WTC11 (cell line): ENCODE measurements at regions of chr1 and their contacts with region 1.

Region 1: DNA sequence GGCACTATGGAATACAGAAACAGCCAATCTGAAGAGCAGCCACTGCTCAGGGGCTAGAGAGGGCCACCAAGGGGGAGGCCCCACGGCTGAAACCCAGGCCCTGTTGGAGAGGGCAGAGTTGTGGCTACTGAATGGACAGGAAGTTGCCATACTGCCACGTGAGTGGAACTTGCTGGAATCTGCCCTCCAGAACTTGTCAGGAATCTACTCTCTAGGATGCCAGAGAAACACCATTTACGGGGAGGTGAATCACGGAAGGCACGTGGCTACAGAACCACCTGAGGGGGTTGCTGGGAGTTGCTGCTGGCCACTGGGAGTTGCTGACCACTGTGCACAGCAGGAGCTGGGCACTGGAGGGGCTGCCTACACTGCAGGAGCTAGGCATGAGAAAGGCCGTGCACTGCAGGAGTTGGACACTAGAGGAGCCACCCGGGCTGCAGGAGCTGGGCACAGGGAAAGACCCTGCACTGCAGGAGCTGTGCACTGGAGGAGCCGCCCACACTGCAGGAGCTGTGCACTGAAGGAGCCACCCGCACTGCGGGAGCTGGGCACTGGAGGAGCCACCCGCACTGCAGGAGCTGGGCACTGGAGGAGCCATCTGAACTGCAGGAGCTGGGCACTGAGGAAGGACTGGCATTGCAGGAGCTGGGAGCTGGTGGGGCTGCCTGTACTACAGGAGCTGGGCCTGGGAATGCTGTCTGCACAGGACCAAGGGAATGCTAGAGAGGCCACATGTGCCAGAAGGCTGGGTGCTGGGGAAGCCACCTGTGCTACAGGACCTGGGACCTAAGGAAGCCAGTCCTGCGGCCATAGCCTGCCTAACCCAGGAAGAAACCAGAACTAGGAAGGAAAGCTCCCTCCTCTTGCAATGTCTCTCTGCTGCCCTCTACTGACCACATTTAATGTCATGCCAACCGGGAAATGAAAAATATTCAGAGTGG is 343.4 kb downstream of the MATN1 start:
- DNase-seq: peak; percentile 50
- ATAC-seq: peak; percentile 85
- H3K4me3 Mint-ChIP-seq: no peak overlapping the region
- H3K27ac Mint-ChIP-seq: no peak overlapping the region
- H3K4me1 Mint-ChIP-seq: no peaks in the 10 kb centered on the region
- H3K27me3 Mint-ChIP-seq: no peaks in the 10 kb centered on the region; the same call in 1 of the 2 replicates
- CTCF ChIP-seq: peak; percentile 66

Region 2: GRCh38 chr1:30111431-30111830 is 268.5 kb before region 1 on chr1:
- CTCF ChIA-PET with region 1: interaction called, 13 read pairs
- POLR2A ChIA-PET with region 1: no interaction called
- DNase-seq: peak; percentile 76
- ATAC-seq: peak; percentile 97
- H3K4me3 Mint-ChIP-seq: no peak overlapping the region
- H3K27ac Mint-ChIP-seq: no peak overlapping the region; the same call in 1 of the 2 replicates
- H3K4me1 Mint-ChIP-seq: 0 out of 2 replicates have a peak, but pooled peaks cover 3% of the 10 kb centered on the region
- H3K27me3 Mint-ChIP-seq: no peaks in the 10 kb centered on the region
- CTCF ChIP-seq: peak; percentile 32; the same call in 1 of the 2 replicates

Region 3: GRCh38 chr1:30287976-30288375 is 92.0 kb before region 1 on chr1:
- CTCF ChIA-PET with region 1: interaction called, 11 read pairs
- POLR2A ChIA-PET with region 1: no interaction called
- DNase-seq: no peak
- ATAC-seq: no peak
- H3K4me3 Mint-ChIP-seq: no peak overlapping the region
- H3K27ac Mint-ChIP-seq: no peak overlapping the region
- H3K4me1 Mint-ChIP-seq: no peaks in the 10 kb centered on the region
- H3K27me3 Mint-ChIP-seq: no peaks in the 10 kb centered on the region
- CTCF ChIP-seq: no peak

Region 4: GRCh38 chr1:30336550-30337323 is 43.2 kb before region 1 on chr1:
- CTCF ChIA-PET with region 1: interaction called, 14 read pairs
- POLR2A ChIA-PET with region 1: no interaction called
- DNase-seq: no peak
- ATAC-seq: no peak
- H3K4me3 Mint-ChIP-seq: no peak overlapping the region
- H3K27ac Mint-ChIP-seq: no peak overlapping the region
- H3K4me1 Mint-ChIP-seq: no peaks in the 10 kb centered on the region
- H3K27me3 Mint-ChIP-seq: no peaks in the 10 kb centered on the region
- CTCF ChIP-seq: no peak

Region 5: DNA sequence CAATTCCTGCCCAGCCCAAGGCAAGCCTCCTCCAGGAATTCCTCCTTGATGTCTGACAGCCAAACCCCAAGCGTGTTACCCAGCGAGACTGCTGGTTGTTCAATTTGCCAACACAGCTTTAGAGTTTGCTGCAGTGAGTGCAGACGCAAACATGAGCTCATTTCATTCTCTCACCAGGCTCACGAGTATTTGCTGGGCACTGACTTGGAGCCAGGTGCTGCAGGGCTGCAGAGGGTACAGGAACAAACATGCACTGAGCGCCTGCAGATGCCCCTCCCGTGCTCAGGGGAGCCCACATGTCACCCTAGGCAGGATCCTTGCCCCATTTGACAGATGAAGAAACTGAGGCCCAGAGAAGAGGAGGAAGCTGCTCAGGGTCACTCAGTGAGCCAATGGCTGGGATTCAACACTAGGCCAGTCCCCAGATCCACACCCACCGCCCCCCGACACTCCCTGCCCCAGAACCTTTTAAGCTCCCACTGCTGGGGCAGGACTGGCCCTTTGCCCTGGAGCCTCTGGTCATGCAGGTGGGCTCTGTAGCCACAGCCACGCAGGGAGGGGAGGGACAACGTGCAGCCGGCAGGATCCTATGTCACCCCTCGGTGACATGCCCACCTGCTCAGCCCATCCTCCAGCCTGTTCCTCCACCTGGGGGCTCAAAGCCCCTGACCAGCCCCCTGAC is 20.3 kb before region 1 on chr1:
- CTCF ChIA-PET with region 1: interaction called, 37 read pairs
- POLR2A ChIA-PET with region 1: no interaction called
- DNase-seq: no peak
- ATAC-seq: no peak
- H3K4me3 Mint-ChIP-seq: no peak overlapping the region
- H3K27ac Mint-ChIP-seq: no peak overlapping the region
- H3K4me1 Mint-ChIP-seq: peaks cover 27% of the 10 kb centered on the region
- H3K27me3 Mint-ChIP-seq: no peaks in the 10 kb centered on the region; the same call in 1 of the 2 replicates
- CTCF ChIP-seq: no peak

Region 6: GRCh38 chr1:30418081-30418938 is 38.4 kb after region 1 on chr1:
- CTCF ChIA-PET with region 1: interaction called, 11 read pairs
- POLR2A ChIA-PET with region 1: no interaction called
- DNase-seq: no peak
- ATAC-seq: no peak
- H3K4me3 Mint-ChIP-seq: no peak overlapping the region
- H3K27ac Mint-ChIP-seq: no peak overlapping the region
- H3K4me1 Mint-ChIP-seq: 0 out of 2 replicates have a peak, but pooled peaks cover 3% of the 10 kb centered on the region
- H3K27me3 Mint-ChIP-seq: no peaks in the 10 kb centered on the region; the same call in 1 of the 2 replicates
- CTCF ChIP-seq: no peak

Region 7: DNA sequence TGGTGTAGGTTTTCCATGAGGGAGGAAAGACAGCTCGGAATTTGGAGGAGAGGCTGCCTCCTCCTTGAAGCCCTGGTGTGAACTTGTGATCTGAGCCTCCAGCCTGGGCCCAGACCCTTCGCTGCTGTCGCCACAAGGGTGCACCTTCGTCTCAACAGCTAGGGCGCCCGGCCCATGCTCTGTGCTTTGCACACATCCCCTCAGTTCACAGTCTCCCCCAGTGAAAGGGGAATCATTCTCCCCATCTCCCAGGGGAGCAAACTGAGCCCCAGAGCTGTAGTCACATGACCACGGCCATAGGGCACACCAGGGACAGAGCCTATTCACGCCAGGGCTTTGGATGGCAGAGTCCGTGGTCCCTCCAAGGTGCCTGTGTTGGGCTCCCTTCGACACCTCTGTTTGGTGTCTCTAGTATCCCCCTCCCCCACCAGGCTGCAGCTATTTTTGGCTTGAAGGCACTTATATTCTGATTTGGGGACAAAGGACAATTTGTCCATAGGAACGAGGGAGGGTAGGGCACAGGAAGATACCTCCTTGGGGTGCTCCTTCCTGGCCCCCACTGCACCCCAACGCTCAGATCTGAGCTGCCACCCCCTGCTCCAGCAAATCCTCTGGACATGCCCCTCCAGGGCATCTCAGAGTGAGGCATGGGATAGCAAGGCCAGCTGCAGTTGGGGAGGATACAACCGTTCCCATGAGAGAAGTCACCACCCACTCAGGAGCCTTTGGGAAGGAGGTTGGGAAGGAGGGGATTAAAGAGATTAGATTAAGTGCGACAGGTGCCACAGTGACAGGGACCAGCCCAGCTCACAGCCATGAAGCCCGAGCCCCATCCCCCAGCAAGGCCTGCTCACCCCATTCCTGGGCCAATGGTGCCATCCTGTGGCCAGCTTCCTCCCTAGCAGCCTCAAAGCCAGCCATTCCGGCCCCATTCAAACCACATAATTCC is 327.7 kb after region 1 on chr1:
- CTCF ChIA-PET with region 1: interaction called, 17 read pairs
- POLR2A ChIA-PET with region 1: no interaction called
- DNase-seq: peak; percentile 88
- ATAC-seq: peak; percentile 92
- H3K4me3 Mint-ChIP-seq: no peak overlapping the region
- H3K27ac Mint-ChIP-seq: no peak overlapping the region
- H3K4me1 Mint-ChIP-seq: peaks cover 3% of the 10 kb centered on the region; the same call in 1 of the 2 replicates
- H3K27me3 Mint-ChIP-seq: peaks cover 2% of the 10 kb centered on the region; the same call in 1 of the 2 replicates
- CTCF ChIP-seq: peak; percentile 73